Tibial artery (tissue), 4 donors: ENCODE measurements at regions of chr18 and their contacts with region 1.

Region 1: GRCh38 chr18:11437046-11437445 is 172.3 kb upstream of the SLC35G4 start:
- DNase-seq: no peak
- H3K4me3 ChIP-seq: no peak overlapping the region
- H3K27ac ChIP-seq: no peak overlapping the region
- H3K4me1 ChIP-seq: no peaks in the 10 kb centered on the region
- H3K27me3 ChIP-seq: no peaks in the 10 kb centered on the region
- CTCF ChIP-seq: no peak

Region 2: DNA sequence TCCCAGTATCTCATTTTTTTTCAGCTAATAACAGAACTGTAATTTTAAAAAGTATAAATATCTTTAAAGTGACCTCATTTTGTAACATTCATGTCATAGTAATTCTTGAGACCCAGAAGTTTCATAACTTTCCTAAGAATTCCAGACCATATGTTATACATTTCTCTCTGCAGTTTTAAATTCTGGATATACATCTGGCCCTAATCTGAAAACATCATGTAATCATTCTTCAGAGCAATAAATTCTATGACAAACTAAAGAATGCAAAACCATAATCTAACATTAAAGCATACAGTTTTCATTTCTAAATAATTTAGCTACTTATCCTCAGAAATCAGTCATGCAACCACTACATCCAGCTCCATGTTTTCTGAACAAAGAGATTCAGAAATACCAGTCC is 26.0 kb before region 1 on chr18:
- intact Hi-C with region 1: loop called (anchors 2 kb)
- DNase-seq: no peak
- H3K4me3 ChIP-seq: no peak overlapping the region
- H3K27ac ChIP-seq: no peak overlapping the region
- H3K4me1 ChIP-seq: no peaks in the 10 kb centered on the region
- H3K27me3 ChIP-seq: no peaks in the 10 kb centered on the region
- CTCF ChIP-seq: no peak